ENCODE measurements at regions of chr1 and their contacts with region 1.

Region 1: DNA sequence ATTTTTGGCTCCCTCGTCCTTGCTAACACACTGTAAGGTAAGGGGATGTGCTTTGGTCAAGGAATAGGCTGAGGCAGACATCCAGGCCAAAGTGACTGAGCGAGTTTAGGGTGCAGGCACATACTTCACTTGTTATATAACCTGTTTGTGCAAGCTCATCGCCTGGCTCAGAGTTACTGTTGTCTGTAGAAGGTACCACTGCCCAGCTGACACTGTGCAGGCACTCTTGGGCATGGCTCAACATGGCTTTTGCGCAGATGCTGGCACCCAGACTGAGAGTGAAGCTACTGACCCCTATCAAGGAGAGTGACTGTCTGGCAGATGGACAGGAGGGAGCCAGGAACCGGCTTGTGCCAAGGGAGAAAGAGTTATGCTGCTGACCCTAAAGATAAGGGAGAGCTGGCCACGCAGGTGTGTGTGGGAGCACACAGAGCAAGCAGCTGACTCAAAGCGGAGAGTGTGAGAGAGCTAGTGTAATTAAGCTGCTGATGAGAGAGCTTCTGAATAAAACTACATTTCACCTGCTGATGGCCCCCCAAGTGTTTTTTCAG is 307.3 kb upstream of the USP24 start:
- DNase-seq: no peak
- CTCF ChIP-seq: no peak

Region 2: GRCh38 chr1:55536545-55536865 is 14.1 kb after region 1 on chr1:
- CTCF ChIA-PET with region 1: interaction called, 20 read pairs
- POLR2A ChIA-PET with region 1: no interaction called
- DNase-seq: no peak
- CTCF ChIP-seq: no peak

Region 3: GRCh38 chr1:55612988-55613387 is 90.6 kb after region 1 on chr1:
- CTCF ChIA-PET with region 1: no interaction called
- POLR2A ChIA-PET with region 1: no interaction called
- DNase-seq: no peak
- CTCF ChIP-seq: no peak

Region 4: DNA sequence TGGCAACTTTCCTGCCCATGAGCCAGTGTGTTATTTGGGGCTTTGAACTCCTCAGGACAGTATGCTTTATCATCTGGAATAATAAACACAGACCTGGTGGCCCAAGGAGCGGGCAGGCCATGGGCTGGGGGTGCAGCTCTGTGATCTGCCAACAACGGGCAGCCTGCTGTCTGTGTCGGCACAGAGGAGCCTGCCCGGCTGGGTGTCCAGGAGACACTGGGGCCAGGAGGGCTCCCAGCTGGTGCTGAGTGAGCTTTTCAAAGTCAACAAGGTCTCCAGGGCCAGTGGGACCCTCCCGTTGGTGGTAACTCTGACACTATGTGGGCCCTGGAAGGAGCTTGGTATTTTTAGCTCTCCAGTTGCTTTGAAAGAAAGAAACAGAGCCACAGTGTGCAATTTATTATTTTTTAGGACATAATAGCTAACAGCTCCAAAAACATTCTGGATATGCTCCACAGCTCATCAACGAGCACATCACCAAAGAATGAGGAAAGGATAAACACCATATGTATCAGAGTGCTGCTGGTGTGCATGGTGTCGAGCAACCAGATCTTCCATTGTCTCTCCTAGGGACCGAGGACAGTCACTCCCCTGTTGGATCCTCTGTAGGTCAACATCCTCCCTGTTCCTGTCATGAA is 181.4 kb after region 1 on chr1:
- CTCF ChIA-PET with region 1: no interaction called
- POLR2A ChIA-PET with region 1: no interaction called
- DNase-seq: no peak
- CTCF ChIP-seq: no peak

Region 5: DNA sequence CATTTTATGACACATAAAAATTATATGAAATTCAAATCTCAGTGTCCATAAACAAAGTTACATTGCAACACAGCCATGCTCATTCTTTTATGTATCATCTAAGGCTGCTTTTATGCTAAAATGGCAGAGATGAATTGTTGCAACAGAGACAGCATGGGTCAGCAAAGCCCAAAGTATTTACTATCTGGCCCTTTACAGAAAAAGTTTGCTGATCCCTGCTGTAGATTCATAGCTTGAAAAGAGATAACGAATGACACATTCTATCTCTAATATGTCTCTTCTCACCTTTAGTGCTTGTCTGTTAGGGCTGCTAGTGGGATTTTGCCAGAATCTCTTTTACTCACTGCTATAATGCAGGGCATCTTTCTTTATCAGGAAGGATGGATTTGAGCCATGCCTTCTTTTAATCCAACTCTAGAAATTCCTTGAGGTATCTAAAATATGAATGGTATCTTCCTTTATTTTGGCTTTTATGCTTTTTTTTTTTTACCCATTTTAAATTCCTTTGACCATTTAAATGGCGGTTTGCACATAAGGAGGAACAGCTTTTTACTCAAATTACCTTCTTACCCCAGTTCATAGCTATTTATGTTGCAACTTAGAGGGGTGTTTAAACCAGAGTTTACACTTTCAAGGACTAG is 458.7 kb after region 1 on chr1:
- CTCF ChIA-PET with region 1: no interaction called
- POLR2A ChIA-PET with region 1: no interaction called
- DNase-seq: no peak
- CTCF ChIP-seq: no peak

Measured in GM10248 (cell line).